ENCODE measurements at regions of chr20 and their contacts with region 1.

Region 1: GRCh38 chr20:57398231-57398821 is 7.1 kb downstream of the RBM38 start:
- DNase-seq: peak; percentile 82
- ATAC-seq: peak; percentile 81
- H3K4me3 Mint-ChIP-seq: peak overlapping the region; percentile 83
- H3K27ac Mint-ChIP-seq: peak overlapping the region; percentile 84
- H3K4me1 Mint-ChIP-seq: peaks cover 53% of the 10 kb centered on the region
- H3K27me3 Mint-ChIP-seq: no peaks in the 10 kb centered on the region

Region 2: GRCh38 chr20:57361212-57361915 is 37.0 kb before region 1 on chr20:
- POLR2A ChIA-PET with region 1: no interaction called
- DNase-seq: no peak
- ATAC-seq: no peak
- H3K4me3 Mint-ChIP-seq: no peak overlapping the region
- H3K27ac Mint-ChIP-seq: no peak overlapping the region
- H3K4me1 Mint-ChIP-seq: peaks cover 2% of the 10 kb centered on the region
- H3K27me3 Mint-ChIP-seq: no peaks in the 10 kb centered on the region

Region 3: DNA sequence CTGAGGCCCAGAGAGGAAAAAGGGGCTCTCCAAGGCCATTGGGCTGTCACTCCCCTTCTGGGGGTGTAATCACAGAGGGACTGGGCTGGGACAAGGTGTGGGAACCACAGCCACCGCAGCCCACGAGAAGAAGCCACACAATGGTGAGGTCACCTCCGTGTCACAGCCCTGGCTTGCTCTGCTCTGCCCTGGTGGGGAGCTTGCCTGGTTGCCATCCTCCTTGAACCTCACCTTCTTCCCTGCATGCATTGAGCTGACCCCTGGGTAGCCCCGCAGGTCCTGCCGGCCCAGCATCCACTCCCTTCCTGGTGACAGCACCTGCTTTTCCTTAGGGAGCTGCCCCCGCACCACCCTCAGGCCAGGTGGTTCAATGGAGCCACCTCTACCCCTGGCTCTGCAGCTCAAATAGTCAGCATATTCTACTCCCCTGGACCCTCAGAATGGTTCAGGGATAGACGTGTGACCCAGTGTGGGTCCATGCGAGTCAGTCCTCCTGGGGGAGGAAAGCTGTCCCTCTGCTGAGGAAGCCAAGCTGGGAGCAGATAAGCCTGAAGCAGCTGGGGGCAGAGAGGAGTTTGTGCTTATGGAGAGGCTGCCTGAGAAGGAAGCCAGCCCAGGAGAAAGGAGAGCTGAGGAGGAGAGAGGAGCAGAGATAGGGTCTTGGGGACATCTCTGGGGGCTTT is 14.2 kb after region 1 on chr20:
- POLR2A ChIA-PET with region 1: interaction called, 15 read pairs
- DNase-seq: no peak
- ATAC-seq: peak; percentile 40
- H3K4me3 Mint-ChIP-seq: no peak overlapping the region
- H3K27ac Mint-ChIP-seq: no peak overlapping the region
- H3K4me1 Mint-ChIP-seq: peaks cover 12% of the 10 kb centered on the region
- H3K27me3 Mint-ChIP-seq: peaks cover 4% of the 10 kb centered on the region

Region 4: DNA sequence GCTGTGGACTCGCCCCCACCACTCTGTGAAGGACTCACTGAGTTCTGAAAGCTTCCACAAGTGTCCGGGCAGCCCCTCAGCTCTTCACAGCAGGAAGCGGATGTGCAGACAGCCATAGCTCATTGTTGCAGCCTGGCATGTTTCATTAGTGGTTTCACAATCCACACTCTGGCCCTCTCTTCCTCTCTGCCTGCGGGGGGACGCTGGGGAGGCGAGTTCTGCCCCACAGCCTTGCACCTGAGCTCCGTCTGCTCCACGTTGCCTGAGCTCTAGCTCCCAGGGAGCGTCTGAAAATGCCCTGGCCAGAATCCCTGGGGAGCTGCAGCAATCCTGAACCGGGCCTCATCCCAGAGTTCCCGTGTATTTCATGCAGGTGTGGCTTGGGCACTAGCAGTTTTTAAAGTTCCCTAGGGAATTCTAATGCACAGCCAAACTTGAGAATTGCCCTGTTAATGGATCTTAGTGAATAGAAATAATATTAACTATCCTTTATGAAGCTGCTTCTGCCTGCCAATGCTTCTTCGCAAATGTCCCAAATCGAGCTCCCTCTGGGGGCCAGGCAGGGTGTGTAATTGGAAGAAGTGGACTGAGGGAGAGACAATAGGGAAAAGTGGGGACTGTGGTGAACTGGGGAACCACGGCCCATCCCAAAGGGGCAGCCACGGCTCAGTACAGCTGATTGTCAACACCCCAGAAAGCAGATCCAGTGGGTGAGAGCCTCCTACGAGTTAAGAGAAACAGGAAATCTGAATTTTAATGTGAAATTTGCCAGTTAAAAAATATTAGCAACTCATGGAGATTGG is 75.1 kb after region 1 on chr20:
- POLR2A ChIA-PET with region 1: interaction called, 13 read pairs
- DNase-seq: peak; percentile 44
- ATAC-seq: peak; percentile 86
- H3K4me3 Mint-ChIP-seq: peak overlapping the region; percentile 44
- H3K27ac Mint-ChIP-seq: peak overlapping the region; percentile 82
- H3K4me1 Mint-ChIP-seq: peaks cover 26% of the 10 kb centered on the region
- H3K27me3 Mint-ChIP-seq: peaks cover 7% of the 10 kb centered on the region

Measured in activated naive CD8-positive, alpha-beta T cell treated with anti-CD3 and anti-CD28 coated beads, Interleukin-2, amount 10 ng/mL, durations not matched to agents 7 days and 5 days (primary cell).